Vagina (tissue), 2 donors: ENCODE measurements at regions of chr20 and their contacts with region 1.

Region 1: DNA sequence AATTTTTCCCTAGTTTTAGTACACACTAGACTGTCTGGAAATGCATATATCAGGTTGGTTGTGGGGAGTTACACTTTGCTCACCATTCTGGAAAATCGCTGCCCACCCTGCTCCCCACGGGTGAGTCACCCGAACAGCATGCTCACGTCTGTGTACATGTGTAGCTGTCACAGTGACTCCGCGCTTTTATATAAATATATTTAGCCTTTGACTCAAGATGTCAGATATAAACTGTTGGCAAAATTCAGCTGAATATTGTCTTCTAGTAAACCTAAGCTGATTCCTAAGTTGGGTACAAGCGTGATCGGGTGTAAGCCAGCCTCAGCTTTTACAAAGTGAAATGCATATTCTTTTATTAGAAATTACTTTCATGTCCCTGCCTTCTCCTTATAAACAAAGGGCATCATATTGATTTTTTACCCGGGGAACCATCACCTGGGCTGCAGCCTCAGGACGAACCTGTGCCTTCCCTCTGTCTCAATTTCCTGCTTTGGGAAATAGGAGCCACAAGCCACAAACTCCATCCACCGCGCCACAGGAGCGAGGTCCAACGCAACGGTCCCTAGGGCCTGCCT is 4.3 kb downstream of the SDCBP2 start:
- DNase-seq: peak in 1 of 2 donors; percentile 87
- H3K4me3 ChIP-seq: peak overlapping the region; percentile 85 to 90
- H3K27ac ChIP-seq: peak overlapping the region; percentile 100
- H3K4me1 ChIP-seq: peaks cover 46% of the 10 kb centered on the region
- H3K27me3 ChIP-seq: no peaks in the 10 kb centered on the region
- CTCF ChIP-seq: no peak
- POLR2A ChIP-seq: no peak

Region 2: GRCh38 chr20:1392823-1393506 is 68.3 kb after region 1 on chr20 and contains the start of gene FKBP1A:
- intact Hi-C with region 1: loop called (anchors 5 kb)
- DNase-seq: no peak
- H3K4me3 ChIP-seq: peak within 1 kb of the TSS; percentile 73 to 91
- H3K27ac ChIP-seq: peak within 1 kb of the TSS; percentile 88
- H3K4me1 ChIP-seq: peaks cover 55% of the 10 kb centered on the region
- H3K27me3 ChIP-seq: no peaks in the 10 kb centered on the region
- CTCF ChIP-seq: no peak
- POLR2A ChIP-seq: peak in 1 of 2 donors; percentile 73
- total RNA-seq, gene FKBP1A: 212 TPM